Naive thymus-derived CD4-positive, alpha-beta T cell (primary cell): ENCODE measurements at regions of chr2 and their contacts with region 1.

Region 1: DNA sequence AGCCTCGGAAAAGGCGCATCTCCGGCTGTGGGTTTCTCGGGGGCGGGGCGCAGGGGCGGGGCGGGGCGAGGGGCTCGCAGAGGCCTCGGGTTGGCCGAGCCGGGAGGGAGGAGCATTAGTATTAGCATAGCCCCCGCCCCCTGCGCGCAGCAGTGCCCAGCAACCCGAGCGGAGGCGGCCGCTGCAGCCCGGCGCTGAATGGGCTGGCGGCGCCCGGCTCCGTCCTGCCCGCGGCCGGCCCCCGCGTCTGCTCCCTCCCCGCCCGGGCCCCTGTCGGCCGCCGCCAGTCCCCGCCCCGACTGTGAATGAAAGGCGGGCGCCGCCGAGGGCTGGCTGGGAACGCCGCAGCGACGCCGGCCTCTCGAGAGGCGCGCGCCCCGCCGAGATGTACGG is at the start of gene EFR3B:
- DNase-seq: peak; percentile 77 to 88 (median 86)
- ATAC-seq: peak; percentile 99
- H3K4me3 ChIP-seq: peak within 1 kb of the TSS; percentile 73
- H3K4me3 Mint-ChIP-seq: peak within 1 kb of the TSS; percentile 79 to 91 (median 89)
- H3K27ac ChIP-seq: peak within 1 kb of the TSS; percentile 18
- H3K27ac Mint-ChIP-seq: peak within 1 kb of the TSS in 6 of 9 donors; percentile 8 to 88 (median 54)
- H3K4me1 ChIP-seq: peaks cover 13 to 17% of the 10 kb centered on the region in 2 donors
- H3K4me1 Mint-ChIP-seq: peaks cover 18 to 30% (median 20%) of the 10 kb centered on the region in 7 donors
- H3K27me3 ChIP-seq: peaks cover 7 to 8% of the 10 kb centered on the region in 2 donors
- H3K27me3 Mint-ChIP-seq: peaks cover 34 to 59% (median 37%) of the 10 kb centered on the region in 5 donors
- total RNA-seq, gene EFR3B: 0.05 to 0.08 (median 0.07) TPM in 3 of 5 experiments, not detected in the others

Region 2: DNA sequence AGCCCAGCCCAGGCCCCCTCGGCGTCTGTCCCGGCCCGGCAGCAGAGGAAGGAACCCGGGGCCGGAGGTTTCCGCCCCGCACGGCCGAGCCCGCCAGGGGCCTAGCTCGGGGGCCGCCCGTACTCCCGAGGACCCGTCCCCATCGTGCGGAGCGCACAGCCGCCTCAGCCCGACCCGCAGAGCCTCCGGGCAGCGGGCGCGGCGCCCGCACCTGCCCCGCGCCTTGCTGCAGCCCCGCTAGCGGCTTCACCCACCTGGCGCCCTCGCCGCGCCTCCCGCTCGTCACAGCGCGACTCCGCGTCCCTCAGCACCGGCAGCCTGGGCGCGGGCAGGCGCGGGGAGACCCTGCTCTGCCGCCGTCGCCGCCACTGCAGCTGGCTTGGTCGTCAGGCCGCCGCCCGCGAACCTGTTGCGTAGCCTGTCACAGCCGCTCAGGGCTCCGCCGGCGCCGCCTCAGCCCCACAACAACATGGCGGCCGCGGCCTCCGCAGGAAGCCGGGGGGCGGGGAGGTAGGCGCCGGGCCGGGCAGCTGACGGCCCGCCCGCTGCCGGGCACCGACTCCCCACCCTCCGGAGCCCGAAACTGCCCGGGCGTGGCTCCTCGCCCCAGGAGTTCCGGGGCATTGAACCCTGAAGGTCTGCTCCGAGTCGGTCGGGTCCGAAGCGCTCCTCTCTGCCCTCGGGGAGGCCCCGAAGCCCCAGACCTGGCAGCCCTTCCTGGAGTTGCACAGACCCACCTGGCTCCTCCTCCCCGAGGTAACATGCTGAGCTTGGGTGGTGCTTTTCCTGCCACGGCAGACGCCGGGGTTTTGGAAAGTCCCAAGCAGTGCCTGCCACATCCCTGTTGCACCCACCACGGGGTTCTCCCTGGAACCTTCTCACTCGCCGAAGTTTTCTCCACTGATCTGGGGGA is 681.6 kb before region 1 on chr2 and contains the start of gene ITSN2:
- CTCF ChIA-PET with region 1: no interaction called
- POLR2A ChIA-PET with region 1: no interaction called
- intact Hi-C with region 1: loop called in 1 of 2 experiments (anchors 2 kb)
- DNase-seq: peak; percentile 76 to 88 (median 83)
- ATAC-seq: peak; percentile 92
- H3K4me3 ChIP-seq: peak within 1 kb of the TSS; percentile 77
- H3K4me3 Mint-ChIP-seq: peak within 1 kb of the TSS; percentile 88 to 98 (median 92)
- H3K27ac ChIP-seq: peak within 1 kb of the TSS; percentile 99
- H3K27ac Mint-ChIP-seq: peak within 1 kb of the TSS; percentile 91 to 97 (median 95)
- H3K4me1 ChIP-seq: peaks cover 1 to 16% of the 10 kb centered on the region in 2 donors
- H3K4me1 Mint-ChIP-seq: peaks cover 22 to 44% (median 31%) of the 10 kb centered on the region in 7 donors
- H3K27me3 ChIP-seq: no peaks in the 10 kb centered on the region
- H3K27me3 Mint-ChIP-seq: peaks cover 0 to 3% (median 0%) of the 10 kb centered on the region in 5 donors
- total RNA-seq, gene ITSN2: 79.2 to 133 (median 106) TPM

Region 3: GRCh38 chr2:24792874-24793760 is 248.8 kb before region 1 on chr2 and contains the starts of genes CENPO and PTRHD1:
- CTCF ChIA-PET with region 1: no interaction called
- POLR2A ChIA-PET with region 1: no interaction called
- intact Hi-C with region 1: loop called (anchors 1 to 2 kb)
- DNase-seq: peak; percentile 93 to 99 (median 97)
- ATAC-seq: peak; percentile 98
- H3K4me3 ChIP-seq: peak within 1 kb of the TSS; percentile 97
- H3K4me3 Mint-ChIP-seq: peak within 1 kb of the TSS; percentile 95 to 100 (median 98)
- H3K27ac ChIP-seq: peak within 1 kb of the TSS; percentile 96
- H3K27ac Mint-ChIP-seq: peak within 1 kb of the TSS; percentile 99 to 100 (median 99)
- H3K4me1 ChIP-seq: peaks cover 6 to 10% of the 10 kb centered on the region in 2 donors
- H3K4me1 Mint-ChIP-seq: peaks cover 5 to 53% (median 20%) of the 10 kb centered on the region in 7 donors
- H3K27me3 ChIP-seq: no peaks in the 10 kb centered on the region
- H3K27me3 Mint-ChIP-seq: no peaks in the 10 kb centered on the region
- total RNA-seq, gene CENPO: 3.6 to 36.6 (median 6.0) TPM
- total RNA-seq, gene PTRHD1: 14.3 to 31.5 (median 17.1) TPM

Region 4: GRCh38 chr2:24926602-24927252 is 115.2 kb before region 1 on chr2:
- CTCF ChIA-PET with region 1: no interaction called
- POLR2A ChIA-PET with region 1: no interaction called
- intact Hi-C with region 1: loop called (anchors 5 kb)
- DNase-seq: peak in 6 of 9 donors; percentile 21 to 46 (median 28)
- ATAC-seq: peak; percentile 57
- H3K4me3 ChIP-seq: peak overlapping the region; percentile 57
- H3K4me3 Mint-ChIP-seq: peak overlapping the region in 8 of 10 donors; percentile 7 to 79 (median 70)
- H3K27ac ChIP-seq: no peak overlapping the region
- H3K27ac Mint-ChIP-seq: peak overlapping the region in 5 of 9 donors; percentile 9 to 72 (median 53)
- H3K4me1 ChIP-seq: peaks cover 0 to 11% of the 10 kb centered on the region in 2 donors
- H3K4me1 Mint-ChIP-seq: peaks cover 0 to 9% (median 4%) of the 10 kb centered on the region in 7 donors
- H3K27me3 ChIP-seq: no peaks in the 10 kb centered on the region
- H3K27me3 Mint-ChIP-seq: peaks cover 0 to 4% (median 0%) of the 10 kb centered on the region in 5 donors

Region 5: GRCh38 chr2:25030702-25031101 is 11.2 kb before region 1 on chr2:
- CTCF ChIA-PET with region 1: no interaction called
- POLR2A ChIA-PET with region 1: no interaction called
- intact Hi-C with region 1: no loop called
- DNase-seq: no peak
- ATAC-seq: peak; percentile 50
- H3K4me3 ChIP-seq: no peak overlapping the region
- H3K4me3 Mint-ChIP-seq: no peak overlapping the region
- H3K27ac ChIP-seq: no peak overlapping the region
- H3K27ac Mint-ChIP-seq: no peak overlapping the region
- H3K4me1 ChIP-seq: no peaks in the 10 kb centered on the region
- H3K4me1 Mint-ChIP-seq: peaks cover 0 to 13% (median 9%) of the 10 kb centered on the region in 7 donors
- H3K27me3 ChIP-seq: no peaks in the 10 kb centered on the region
- H3K27me3 Mint-ChIP-seq: no peaks in the 10 kb centered on the region

Region 6: GRCh38 chr2:25184261-25184695 is 142.4 kb after region 1 on chr2:
- CTCF ChIA-PET with region 1: no interaction called
- POLR2A ChIA-PET with region 1: no interaction called
- intact Hi-C with region 1: no loop called
- DNase-seq: no peak
- ATAC-seq: no peak
- H3K4me3 ChIP-seq: no peak overlapping the region
- H3K4me3 Mint-ChIP-seq: no peak overlapping the region
- H3K27ac ChIP-seq: no peak overlapping the region
- H3K27ac Mint-ChIP-seq: no peak overlapping the region
- H3K4me1 ChIP-seq: no peaks in the 10 kb centered on the region
- H3K4me1 Mint-ChIP-seq: peaks cover 0 to 3% (median 0%) of the 10 kb centered on the region in 7 donors
- H3K27me3 ChIP-seq: peaks cover 0 to 3% of the 10 kb centered on the region in 2 donors
- H3K27me3 Mint-ChIP-seq: peaks cover 0 to 27% (median 0%) of the 10 kb centered on the region in 5 donors

Region 7: DNA sequence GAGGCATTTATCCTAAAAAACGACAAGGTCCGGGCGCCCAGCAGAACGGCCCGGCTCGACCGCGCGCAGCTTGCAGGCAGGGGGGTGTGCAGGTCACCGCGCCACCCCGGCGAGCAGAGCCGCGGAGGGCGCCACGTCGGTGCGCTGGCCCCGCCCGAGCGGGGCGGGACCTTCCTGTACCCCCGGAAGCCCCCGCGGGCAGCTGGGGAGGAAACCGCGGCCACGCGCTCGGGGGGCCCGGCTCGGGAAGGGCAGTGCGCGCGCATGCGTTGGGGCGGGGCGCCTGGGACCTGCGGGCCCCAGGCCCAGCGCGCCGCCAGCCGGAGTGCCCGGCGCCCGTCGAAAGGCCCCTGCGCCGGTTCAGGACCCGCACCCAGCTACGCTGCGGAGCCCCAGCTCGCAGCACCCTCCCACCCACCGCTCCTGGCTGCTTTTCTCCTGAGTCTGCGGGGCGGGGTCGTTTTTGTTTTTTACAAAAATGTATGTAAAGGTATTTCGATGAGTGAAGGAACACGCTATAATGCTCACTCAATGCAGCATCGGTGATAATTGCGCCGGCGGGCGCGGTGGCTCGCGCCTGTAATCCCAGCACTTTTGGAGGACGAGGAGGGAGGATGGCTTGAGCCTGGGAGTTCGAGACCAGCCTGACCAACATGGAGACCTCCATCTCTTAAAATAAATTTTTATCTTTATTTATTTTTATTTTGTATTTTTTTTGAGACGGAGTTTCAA is 174.2 kb after region 1 on chr2:
- CTCF ChIA-PET with region 1: no interaction called
- POLR2A ChIA-PET with region 1: no interaction called
- intact Hi-C with region 1: loop called in 1 of 2 experiments (anchors 10 kb)
- DNase-seq: peak; percentile 73 to 88 (median 85)
- ATAC-seq: peak; percentile 96
- H3K4me3 ChIP-seq: peak overlapping the region; percentile 61
- H3K4me3 Mint-ChIP-seq: peak overlapping the region; percentile 71 to 88 (median 78)
- H3K27ac ChIP-seq: peak overlapping the region; percentile 74
- H3K27ac Mint-ChIP-seq: peak overlapping the region; percentile 64 to 94 (median 89)
- H3K4me1 ChIP-seq: peaks cover 0 to 6% of the 10 kb centered on the region in 2 donors
- H3K4me1 Mint-ChIP-seq: peaks cover 9 to 33% (median 18%) of the 10 kb centered on the region in 7 donors
- H3K27me3 ChIP-seq: no peaks in the 10 kb centered on the region
- H3K27me3 Mint-ChIP-seq: no peaks in the 10 kb centered on the region